ENCODE measurements at regions of chr7 and their contacts with region 1.

Region 1: DNA sequence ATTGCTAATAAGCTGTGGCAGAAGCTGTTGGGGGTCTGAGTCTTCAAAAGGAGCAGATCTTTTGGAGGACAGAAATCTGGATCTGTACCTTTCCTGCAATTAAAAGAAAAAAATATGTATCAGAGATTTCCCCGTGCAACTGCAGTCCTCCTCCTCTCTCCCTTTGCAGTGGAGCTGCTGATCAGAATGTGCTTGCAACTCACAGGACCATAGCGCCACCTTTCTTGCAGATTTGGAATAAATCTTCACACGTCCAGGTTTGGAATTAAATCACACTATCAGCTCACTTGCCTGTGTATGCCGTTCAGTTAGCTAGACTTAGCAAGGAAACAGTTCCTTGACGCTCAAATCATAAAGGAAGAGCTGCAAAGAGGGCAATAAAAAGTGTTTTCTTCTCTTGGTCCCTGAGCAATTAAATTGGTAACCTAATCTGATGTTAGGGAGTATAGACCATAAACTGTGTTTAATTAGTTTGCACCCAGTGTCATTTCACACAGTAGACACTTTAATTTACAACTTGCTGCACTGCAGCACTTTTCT is 77.4 kb downstream of the PON1 start:
- DNase-seq: peak; percentile 5
- ATAC-seq: peak; percentile 91
- H3K4me3 ChIP-seq: no peak overlapping the region
- H3K27ac ChIP-seq: no peak overlapping the region
- H3K4me1 ChIP-seq: no peaks in the 10 kb centered on the region
- H3K27me3 ChIP-seq: no peaks in the 10 kb centered on the region
- CTCF ChIP-seq: peak; percentile 57 to 75 (median 65)
- EP300 ChIP-seq: no peak
- POLR2A ChIP-seq: no peak
- RAD21 ChIP-seq: peak; percentile 82

Region 2: DNA sequence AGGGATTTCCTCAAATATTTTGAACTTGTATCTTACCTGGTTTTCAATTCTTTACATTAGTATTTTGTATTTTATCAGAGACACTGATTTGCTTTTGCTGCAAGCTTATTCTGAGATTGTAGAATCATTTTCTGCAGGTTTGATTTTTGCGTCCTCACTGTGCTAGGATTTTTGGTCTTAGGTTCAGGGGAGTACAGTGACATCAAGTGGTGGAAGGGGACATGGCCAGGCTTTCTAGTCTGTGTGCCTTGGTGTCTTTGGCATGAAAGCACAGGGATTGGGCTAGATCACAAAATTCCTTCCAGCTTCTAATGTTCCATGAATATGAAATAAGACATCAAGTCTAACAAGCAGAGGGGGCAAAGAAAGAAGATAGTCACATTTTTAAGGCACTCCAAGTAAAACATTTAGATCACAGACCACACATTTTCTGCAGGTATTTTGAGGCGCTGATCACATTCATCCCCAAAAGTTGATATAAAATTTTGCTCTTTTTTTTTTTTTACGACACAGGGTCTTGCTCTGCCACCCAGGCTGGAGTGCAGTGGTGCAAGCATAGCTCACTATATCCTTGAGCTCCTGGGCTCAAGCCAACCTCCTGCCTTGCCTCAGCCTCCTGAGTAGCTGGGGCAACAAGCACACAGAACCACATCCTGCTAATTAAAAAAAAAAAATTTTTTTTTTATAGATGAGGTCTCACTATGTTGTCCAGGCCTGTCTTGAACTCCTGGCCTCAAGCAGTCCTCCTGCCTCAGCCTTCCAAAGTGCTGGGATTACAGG is 46.9 kb before region 1 on chr7:
- CTCF ChIA-PET with region 1: interaction called, 29 read pairs
- POLR2A ChIA-PET with region 1: no interaction called
- RAD21 ChIA-PET with region 1: interaction called, 9 read pairs
- SMC1A ChIA-PET with region 1: interaction called, 5 read pairs
- in situ Hi-C with region 1: no loop called
- intact Hi-C with region 1: no loop called
- DNase-seq: no peak
- ATAC-seq: peak; percentile 85
- H3K4me3 ChIP-seq: no peak overlapping the region
- H3K27ac ChIP-seq: no peak overlapping the region
- H3K4me1 ChIP-seq: no peaks in the 10 kb centered on the region
- H3K27me3 ChIP-seq: no peaks in the 10 kb centered on the region
- CTCF ChIP-seq: peak; percentile 52 to 64 (median 62)
- EP300 ChIP-seq: no peak
- POLR2A ChIP-seq: no peak
- RAD21 ChIP-seq: peak; percentile 75

Region 3: GRCh38 chr7:95263785-95264575 is 17.1 kb after region 1 on chr7:
- CTCF ChIA-PET with region 1: interaction called, 18 read pairs
- POLR2A ChIA-PET with region 1: no interaction called
- RAD21 ChIA-PET with region 1: interaction called, 4 read pairs
- SMC1A ChIA-PET with region 1: interaction called, 4 read pairs
- in situ Hi-C with region 1: no loop called
- intact Hi-C with region 1: no loop called
- DNase-seq: no peak
- ATAC-seq: peak; percentile 78
- H3K4me3 ChIP-seq: no peak overlapping the region
- H3K27ac ChIP-seq: no peak overlapping the region
- H3K4me1 ChIP-seq: no peaks in the 10 kb centered on the region
- H3K27me3 ChIP-seq: no peaks in the 10 kb centered on the region
- CTCF ChIP-seq: no peak
- EP300 ChIP-seq: no peak
- POLR2A ChIP-seq: no peak
- RAD21 ChIP-seq: no peak

Region 4: GRCh38 chr7:95470452-95470851 is 223.6 kb after region 1 on chr7:
- CTCF ChIA-PET with region 1: interaction called, 36 read pairs
- POLR2A ChIA-PET with region 1: no interaction called
- RAD21 ChIA-PET with region 1: interaction called, 38 read pairs
- SMC1A ChIA-PET with region 1: interaction called, 56 read pairs
- in situ Hi-C with region 1: no loop called
- intact Hi-C with region 1: loop called (anchors 2 kb)
- DNase-seq: no peak
- ATAC-seq: peak; percentile 99
- H3K4me3 ChIP-seq: no peak overlapping the region
- H3K27ac ChIP-seq: no peak overlapping the region
- H3K4me1 ChIP-seq: no peaks in the 10 kb centered on the region; the same call in 1 of the 2 replicates
- H3K27me3 ChIP-seq: no peaks in the 10 kb centered on the region
- CTCF ChIP-seq: no peak
- EP300 ChIP-seq: no peak
- POLR2A ChIP-seq: no peak
- RAD21 ChIP-seq: no peak